ENCODE measurements at regions of chr7 and their contacts with region 1.

Region 1: DNA sequence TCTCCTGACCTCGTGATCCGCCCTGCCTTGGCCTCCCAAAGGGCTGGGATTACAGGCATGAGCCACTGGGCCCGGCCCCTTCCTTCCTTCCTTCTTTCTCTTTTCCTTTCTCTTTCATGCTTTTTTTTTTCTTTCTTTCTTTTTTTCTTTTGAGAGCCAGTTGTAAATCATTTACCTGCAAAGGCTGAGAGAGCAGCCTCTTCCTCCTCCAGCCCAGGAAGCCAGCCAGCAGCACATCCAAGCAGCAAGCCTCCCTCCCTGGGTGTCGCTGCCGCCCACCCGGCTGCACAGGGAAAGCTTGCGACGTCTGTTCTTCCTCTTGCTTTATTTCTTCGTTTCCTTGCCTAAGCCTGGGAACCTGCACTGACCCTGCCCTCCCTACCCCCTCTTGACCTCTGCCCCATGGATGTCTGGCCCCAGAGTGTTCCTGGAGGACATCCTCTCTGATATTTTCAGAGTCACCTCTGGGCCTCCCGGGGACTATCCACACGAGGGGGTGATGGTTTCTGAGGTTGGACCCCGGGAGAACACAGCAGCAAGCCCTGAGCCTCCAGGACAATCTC is 62.8 kb upstream of the MYL10 start:
- DNase-seq: peak; percentile 54 to 65 (median 60)
- ATAC-seq: peak; percentile 40 to 70 (median 67)
- H3K4me3 ChIP-seq: peak overlapping the region in 1 of 3 donors; percentile 21
- H3K27ac ChIP-seq: no peak overlapping the region
- H3K4me1 ChIP-seq: peaks cover 0 to 10% (median 1%) of the 10 kb centered on the region in 4 donors
- H3K27me3 ChIP-seq: no peaks in the 10 kb centered on the region
- CTCF ChIP-seq: no peak
- POLR2A ChIP-seq: no peak

Region 2: DNA sequence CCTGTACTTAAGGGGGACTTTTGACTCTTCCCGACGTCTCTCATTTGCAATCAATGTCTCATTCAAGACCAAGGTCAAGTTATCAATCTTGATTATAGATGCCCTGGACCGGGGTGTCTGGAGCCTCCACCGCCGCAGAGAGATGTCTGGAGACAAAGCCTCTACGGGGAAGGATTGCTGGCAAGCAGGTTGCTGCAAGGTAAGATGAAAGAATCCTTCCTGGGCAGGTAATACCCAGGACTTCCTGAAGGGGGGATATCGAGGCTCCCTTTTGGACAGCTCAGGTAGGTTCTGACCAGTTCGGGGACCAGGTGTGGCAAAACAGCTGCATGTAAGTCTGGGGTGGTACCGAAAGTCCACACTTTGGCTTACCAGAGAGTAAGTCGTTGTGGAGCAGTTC is 113.1 kb after region 1 on chr7:
- intact Hi-C with region 1: loop called (anchors 10 kb)
- DNase-seq: no peak
- ATAC-seq: peak in 3 of 4 donors; percentile 28 to 42 (median 41)
- H3K4me3 ChIP-seq: no peak overlapping the region
- H3K27ac ChIP-seq: no peak overlapping the region
- H3K4me1 ChIP-seq: no peaks in the 10 kb centered on the region
- H3K27me3 ChIP-seq: no peaks in the 10 kb centered on the region
- CTCF ChIP-seq: peak in 3 of 4 donors; percentile 19 to 20 (median 19)
- POLR2A ChIP-seq: no peak

Region 3: DNA sequence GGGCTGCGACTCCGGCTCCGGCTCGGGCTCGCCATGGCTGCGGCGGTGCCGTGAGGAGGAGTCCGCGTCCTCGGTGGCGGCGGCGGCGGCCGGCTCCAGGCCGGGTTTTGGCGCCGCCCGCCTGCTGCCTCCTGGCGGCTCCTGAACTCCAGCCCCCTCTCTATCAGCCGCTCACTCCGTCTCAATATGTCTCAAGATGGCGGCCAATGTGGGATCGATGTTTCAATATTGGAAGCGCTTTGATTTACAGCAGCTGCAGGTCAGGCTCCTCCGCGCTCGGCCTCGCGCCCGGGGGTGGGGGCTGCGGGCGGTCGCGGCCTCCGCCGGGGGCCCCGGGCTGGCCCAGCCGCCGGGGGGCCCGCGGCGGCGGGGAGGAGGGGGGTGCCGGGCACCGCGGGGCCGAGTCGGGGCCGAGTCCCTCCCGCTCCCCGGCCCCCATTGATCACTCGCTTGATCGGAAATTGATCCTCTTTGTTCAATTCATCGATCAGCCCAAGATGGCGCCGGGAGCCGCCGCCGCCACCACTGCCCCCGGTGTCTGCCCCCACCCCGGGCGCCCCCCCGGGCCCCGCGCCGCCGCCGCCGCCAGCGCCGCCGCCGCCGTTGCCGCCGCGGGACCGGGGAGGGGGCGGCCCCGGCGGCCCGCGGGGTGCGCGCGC is 124.1 kb after region 1 on chr7:
- intact Hi-C with region 1: loop called in 1 of 2 experiments (anchors 10 kb)
- DNase-seq: peak; percentile 76 to 77 (median 77)
- ATAC-seq: peak; percentile 57 to 76 (median 64)
- H3K4me3 ChIP-seq: peak overlapping the region; percentile 32 to 84 (median 52)
- H3K27ac ChIP-seq: peak overlapping the region in 2 of 3 donors; percentile 57 to 83
- H3K4me1 ChIP-seq: peaks cover 0 to 24% (median 6%) of the 10 kb centered on the region in 4 donors
- H3K27me3 ChIP-seq: no peaks in the 10 kb centered on the region
- CTCF ChIP-seq: peak in 2 of 4 donors; percentile 10 to 36
- POLR2A ChIP-seq: peak; percentile 39

Measured in right lobe of liver (tissue), 6 donors.